ENCODE measurements at regions of chr3 and their contacts with region 1.

Region 1: GRCh38 chr3:133535971-133536634 is 37.4 kb upstream of the CDV3 start:
- DNase-seq: no peak
- H3K4me3 ChIP-seq: no peak overlapping the region
- H3K27me3 ChIP-seq: no peaks in the 10 kb centered on the region
- CTCF ChIP-seq: no peak

Region 2: GRCh38 chr3:133330065-133330464 is 206.0 kb before region 1 on chr3:
- CTCF ChIA-PET with region 1: no interaction called
- POLR2A ChIA-PET with region 1: no interaction called
- DNase-seq: no peak
- H3K4me3 ChIP-seq: no peak overlapping the region
- H3K27me3 ChIP-seq: peaks cover 2% of the 10 kb centered on the region; the same call in 1 of the 2 replicates
- CTCF ChIP-seq: no peak

Region 3: DNA sequence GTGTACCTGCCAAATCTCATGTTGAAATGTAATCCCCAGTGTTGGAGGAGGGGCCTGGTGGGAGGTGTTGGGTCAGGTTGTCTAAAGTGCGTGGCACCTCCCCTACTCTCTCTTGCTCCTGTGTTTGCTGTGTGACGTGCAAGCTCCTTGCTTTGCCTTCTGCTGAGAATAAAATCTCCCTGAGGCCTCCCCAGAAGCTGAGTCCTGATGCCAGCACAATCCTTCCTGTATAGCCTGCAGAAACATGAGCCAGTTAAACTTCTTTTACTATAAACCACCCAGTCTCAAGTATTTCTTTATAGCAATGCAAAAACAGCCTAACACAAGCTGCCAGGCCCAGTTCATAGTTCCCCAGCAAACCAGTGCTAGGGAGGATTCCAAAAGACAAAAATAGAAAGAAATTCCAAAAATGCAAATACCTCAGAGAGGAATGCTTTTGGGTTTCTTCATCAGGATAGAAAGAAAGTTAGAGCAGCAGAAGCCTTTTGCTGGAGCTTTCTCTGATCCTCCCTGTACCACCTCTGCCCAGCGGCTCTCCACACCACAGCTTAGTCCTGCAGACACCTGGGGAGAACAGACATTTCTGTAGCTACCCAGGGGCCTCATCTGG is 11.4 kb after region 1 on chr3:
- CTCF ChIA-PET with region 1: interaction called, 10 read pairs
- POLR2A ChIA-PET with region 1: no interaction called
- DNase-seq: peak; percentile 76
- H3K4me3 ChIP-seq: no peak overlapping the region
- H3K27me3 ChIP-seq: no peaks in the 10 kb centered on the region
- CTCF ChIP-seq: no peak